ENCODE measurements at regions of chr9 and their contacts with region 1.

Region 1: DNA sequence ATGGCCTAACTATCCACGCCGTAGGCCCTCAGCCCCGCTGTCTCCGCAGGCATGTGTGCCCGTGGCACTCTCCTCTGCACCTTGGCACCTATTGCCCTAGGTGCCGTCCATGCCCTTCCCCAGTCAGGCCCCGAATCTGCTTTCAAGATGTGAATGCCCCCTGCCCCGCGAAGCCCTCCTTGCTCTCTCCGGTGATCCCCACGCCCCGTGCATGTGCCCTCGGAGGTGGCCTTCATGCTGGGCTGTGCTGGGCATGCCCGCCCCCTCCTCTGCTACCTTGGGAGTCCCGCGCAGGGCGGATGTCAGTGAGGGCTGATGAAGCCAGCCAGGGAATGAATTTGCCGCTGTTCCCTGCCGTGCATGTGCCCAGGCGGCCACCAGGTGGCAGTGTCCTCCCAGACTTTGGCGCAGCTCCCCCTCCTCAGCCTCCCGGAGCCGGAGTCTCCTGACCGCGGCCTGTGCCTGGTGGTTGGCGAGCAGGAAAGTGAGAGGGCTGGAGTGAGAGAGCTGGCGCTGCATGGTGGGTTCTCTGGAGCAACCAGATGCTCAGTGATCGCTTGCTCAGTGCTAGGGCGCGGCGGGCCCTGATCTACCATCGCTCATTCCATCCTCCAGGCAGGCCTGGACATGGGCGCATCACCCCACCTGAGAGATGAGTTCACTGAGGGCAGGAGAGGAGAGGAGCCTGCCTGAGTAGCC is 112.9 kb upstream of the LMX1B start:
- H3K4me3 ChIP-seq: no peak overlapping the region
- H3K27ac ChIP-seq: no peak overlapping the region
- H3K4me1 ChIP-seq: no peaks in the 10 kb centered on the region; the same call in 1 of the 2 replicates
- CTCF ChIP-seq: peak; percentile 93

Region 2: GRCh38 chr9:126326228-126327005 is 174.4 kb before region 1 on chr9 and contains the start of gene MVB12B:
- CTCF ChIA-PET with region 1: no interaction called
- POLR2A ChIA-PET with region 1: no interaction called
- H3K4me3 ChIP-seq: peak within 1 kb of the TSS; percentile 60
- H3K27ac ChIP-seq: peak within 1 kb of the TSS; percentile 83
- H3K4me1 ChIP-seq: peaks cover 3% of the 10 kb centered on the region; the same call in 1 of the 2 replicates
- CTCF ChIP-seq: no peak

Region 3: DNA sequence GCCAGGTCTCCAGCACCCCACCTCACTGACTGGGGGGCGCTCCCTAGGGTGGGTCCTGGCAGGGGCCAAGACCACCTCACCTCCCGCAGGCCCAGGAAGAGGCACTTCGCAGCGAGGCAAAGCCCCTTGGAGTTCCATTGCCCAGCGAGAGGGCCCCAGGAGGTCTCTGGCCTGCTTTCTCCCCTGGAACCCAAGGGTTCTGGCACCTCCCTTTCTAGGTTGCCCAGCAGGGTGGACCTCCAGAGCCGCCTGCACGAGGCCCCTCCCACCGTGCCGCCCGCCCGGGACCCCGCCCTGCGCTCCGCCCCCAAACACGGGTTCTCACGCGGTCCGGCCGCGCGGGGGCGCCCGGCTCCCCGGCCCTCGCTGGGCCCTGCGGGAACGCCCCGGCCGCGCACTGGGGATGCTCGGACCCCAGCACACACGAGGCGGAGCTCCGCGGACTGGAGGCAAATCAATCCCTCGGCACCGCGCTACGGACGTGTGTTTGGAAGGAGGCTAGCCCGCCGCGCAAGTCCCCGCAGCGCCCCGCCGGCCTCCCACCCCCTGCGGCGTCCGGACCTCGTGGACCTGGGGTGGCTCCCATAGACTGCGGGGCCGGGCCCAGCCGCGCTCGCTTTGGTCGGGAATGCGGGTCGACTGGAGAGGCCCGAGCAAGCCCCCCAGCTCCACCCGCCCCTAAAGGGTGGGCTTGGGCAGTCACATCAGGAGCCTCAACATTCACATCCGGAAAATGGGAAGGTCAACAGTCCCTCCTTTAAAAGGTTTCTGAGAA is 13.4 kb after region 1 on chr9:
- CTCF ChIA-PET with region 1: interaction called, 63 read pairs
- POLR2A ChIA-PET with region 1: interaction called, 3 read pairs
- H3K4me3 ChIP-seq: peak overlapping the region; percentile 5
- H3K27ac ChIP-seq: no peak overlapping the region
- H3K4me1 ChIP-seq: peaks cover 12% of the 10 kb centered on the region
- CTCF ChIP-seq: no peak

Region 4: GRCh38 chr9:126550891-126551351 is 50.1 kb after region 1 on chr9:
- CTCF ChIA-PET with region 1: interaction called, 184 read pairs
- POLR2A ChIA-PET with region 1: no interaction called
- H3K4me3 ChIP-seq: no peak overlapping the region
- H3K27ac ChIP-seq: no peak overlapping the region
- H3K4me1 ChIP-seq: no peaks in the 10 kb centered on the region
- CTCF ChIP-seq: no peak

Region 5: GRCh38 chr9:126564711-126565110 is 63.9 kb after region 1 on chr9:
- CTCF ChIA-PET with region 1: interaction called, 52 read pairs
- POLR2A ChIA-PET with region 1: interaction called, 3 read pairs
- H3K4me3 ChIP-seq: no peak overlapping the region
- H3K27ac ChIP-seq: no peak overlapping the region
- H3K4me1 ChIP-seq: no peaks in the 10 kb centered on the region
- CTCF ChIP-seq: no peak

Region 6: DNA sequence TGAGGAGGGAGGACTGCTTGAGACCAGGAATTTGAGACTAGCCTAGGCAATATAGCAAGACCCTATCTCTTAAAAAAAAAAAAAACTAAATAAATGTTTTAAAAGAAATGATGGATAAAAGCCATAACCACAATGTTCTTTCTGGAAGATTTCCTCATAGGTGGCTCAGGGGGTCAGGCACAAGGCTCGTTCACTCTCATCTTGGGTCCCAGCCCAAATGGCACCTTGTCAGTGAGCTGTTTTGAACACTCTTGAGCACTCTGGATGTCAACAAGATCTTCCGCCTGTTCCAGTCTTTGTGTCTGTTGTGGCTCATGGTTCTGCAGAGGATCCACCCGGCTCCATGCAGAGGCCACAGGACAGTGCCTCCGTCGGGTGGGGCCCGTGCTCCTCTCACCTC is 77.2 kb after region 1 on chr9:
- CTCF ChIA-PET with region 1: interaction called, 13 read pairs
- POLR2A ChIA-PET with region 1: no interaction called
- H3K4me3 ChIP-seq: no peak overlapping the region
- H3K27ac ChIP-seq: no peak overlapping the region
- H3K4me1 ChIP-seq: 0 out of 2 replicates have a peak, but pooled peaks cover 4% of the 10 kb centered on the region
- CTCF ChIP-seq: no peak

Region 7: GRCh38 chr9:126781186-126782052 is 280.6 kb after region 1 on chr9:
- CTCF ChIA-PET with region 1: interaction called, 65 read pairs
- POLR2A ChIA-PET with region 1: no interaction called
- H3K4me3 ChIP-seq: no peak overlapping the region
- H3K27ac ChIP-seq: no peak overlapping the region
- H3K4me1 ChIP-seq: no peaks in the 10 kb centered on the region
- CTCF ChIP-seq: peak; percentile 72; the same call in 1 of the 2 replicates

Region 8: GRCh38 chr9:126956917-126957686 is 456.3 kb after region 1 on chr9:
- CTCF ChIA-PET with region 1: no interaction called
- POLR2A ChIA-PET with region 1: no interaction called
- H3K4me3 ChIP-seq: no peak overlapping the region
- H3K27ac ChIP-seq: no peak overlapping the region
- H3K4me1 ChIP-seq: peaks cover 3% of the 10 kb centered on the region; the same call in 1 of the 2 replicates
- CTCF ChIP-seq: no peak

Measured in HEK293 (cell line).